Motor neuron (in vitro differentiated cells): ENCODE measurements at regions of chr2 and their contacts with region 1.

Region 1: DNA sequence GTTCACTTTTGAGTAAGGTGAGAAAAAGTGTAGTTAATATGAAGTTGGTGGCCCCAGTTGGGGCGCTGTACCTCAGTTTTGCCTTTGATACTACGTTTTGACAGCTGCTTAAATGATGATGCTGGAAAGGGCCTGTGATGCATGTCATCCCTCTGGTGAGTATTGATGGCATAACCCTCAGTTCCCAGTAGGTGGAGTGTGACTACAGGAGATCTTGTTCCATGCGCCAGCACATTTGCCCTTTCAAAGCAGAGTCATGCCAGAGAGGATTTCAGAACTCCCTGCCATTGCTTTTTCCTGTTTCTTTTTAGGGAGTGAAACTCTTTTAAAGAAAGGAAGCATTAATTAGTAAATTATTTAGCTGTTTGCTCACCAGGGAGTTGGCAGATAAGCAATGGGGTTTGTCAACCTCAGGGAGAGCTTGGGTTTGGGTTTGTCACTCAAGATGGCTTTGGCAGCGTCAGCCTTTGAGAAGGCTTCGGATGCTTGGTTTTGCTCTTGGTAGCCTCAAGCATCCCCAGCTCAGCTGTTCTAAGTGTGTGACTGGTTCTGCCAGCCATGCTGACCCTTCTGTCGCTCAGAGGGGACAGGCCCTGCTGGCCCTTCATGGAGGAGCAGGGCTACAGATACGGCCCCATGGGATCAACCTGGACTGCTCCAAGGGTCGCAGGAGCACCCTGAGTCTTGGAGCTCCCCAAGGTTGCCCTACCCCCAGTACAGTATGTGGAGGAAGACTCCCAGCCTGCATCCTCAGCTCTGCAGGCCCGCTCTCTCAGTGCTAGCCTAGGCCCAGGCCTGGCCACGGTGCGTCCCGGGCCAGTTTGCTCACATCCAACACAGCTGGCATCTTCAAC is 29.1 kb downstream of the ARMC9 start:
- ATAC-seq: peak; percentile 84 to 99 (median 95)
- H3K4me3 ChIP-seq: no peak overlapping the region
- H3K27ac ChIP-seq: no peak overlapping the region
- H3K4me1 ChIP-seq: peaks cover 11 to 14% of the 10 kb centered on the region in 2 donors

Region 2: GRCh38 chr2:231411831-231412617 is 184.5 kb after region 1 on chr2:
- in situ Hi-C with region 1: loop called in 2 of 9 experiments (anchors 25 kb)
- ATAC-seq: peak; percentile 97 to 99 (median 98)
- H3K4me3 ChIP-seq: peak overlapping the region; percentile 31 to 44 (median 39)
- H3K27ac ChIP-seq: peak overlapping the region in 1 of 2 donors; percentile 16
- H3K4me1 ChIP-seq: peaks cover 9 to 25% of the 10 kb centered on the region in 2 donors

Region 3: DNA sequence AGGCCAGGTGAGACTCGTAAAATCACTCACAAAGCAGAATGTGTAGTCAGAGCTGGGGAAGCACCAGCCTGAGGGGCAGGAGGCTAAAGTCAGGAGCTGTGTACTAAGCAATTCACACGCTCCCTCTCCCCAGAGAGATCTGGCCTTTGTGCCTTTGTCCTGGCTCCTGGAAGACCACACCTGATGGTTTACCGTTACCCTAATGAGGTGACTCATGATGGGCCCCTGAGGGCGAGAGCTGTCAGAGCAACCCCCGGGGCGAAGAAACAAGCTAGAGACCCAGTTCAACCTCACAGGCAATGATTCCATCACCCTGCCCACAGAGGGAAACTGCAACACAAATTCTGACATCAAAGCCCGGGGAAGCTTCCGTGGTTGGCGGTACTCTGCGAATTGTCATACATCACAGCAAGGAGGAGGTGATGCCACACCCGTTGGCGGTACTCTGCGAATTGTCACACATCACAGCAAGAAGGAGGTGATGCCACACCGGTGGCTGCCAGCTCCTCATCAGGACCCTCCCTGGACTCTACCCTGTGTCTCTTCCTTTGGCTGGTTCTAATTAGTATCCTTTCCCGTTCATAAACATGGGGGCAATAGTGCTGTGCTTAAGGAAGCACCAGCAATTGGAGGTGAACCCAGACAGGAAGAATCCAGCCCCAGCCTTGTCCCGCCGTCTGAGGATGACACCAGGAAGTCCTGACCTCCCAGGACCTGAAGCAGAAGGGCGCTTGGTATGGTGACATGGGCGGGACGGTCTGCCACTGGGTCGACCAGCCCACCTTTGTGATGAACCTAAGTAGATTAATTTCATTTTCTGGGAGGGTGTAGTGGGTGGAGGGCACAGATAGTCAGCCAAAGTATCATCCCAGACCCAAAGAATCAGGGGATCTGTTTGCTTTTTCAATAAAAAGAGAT is 198.5 kb after region 1 on chr2:
- in situ Hi-C with region 1: loop called in 4 of 9 experiments (anchors 25 kb)
- ATAC-seq: peak in 3 of 8 experiments; percentile 44 to 73 (median 44)
- H3K4me3 ChIP-seq: no peak overlapping the region
- H3K27ac ChIP-seq: no peak overlapping the region
- H3K4me1 ChIP-seq: no peaks in the 10 kb centered on the region

Region 4: DNA sequence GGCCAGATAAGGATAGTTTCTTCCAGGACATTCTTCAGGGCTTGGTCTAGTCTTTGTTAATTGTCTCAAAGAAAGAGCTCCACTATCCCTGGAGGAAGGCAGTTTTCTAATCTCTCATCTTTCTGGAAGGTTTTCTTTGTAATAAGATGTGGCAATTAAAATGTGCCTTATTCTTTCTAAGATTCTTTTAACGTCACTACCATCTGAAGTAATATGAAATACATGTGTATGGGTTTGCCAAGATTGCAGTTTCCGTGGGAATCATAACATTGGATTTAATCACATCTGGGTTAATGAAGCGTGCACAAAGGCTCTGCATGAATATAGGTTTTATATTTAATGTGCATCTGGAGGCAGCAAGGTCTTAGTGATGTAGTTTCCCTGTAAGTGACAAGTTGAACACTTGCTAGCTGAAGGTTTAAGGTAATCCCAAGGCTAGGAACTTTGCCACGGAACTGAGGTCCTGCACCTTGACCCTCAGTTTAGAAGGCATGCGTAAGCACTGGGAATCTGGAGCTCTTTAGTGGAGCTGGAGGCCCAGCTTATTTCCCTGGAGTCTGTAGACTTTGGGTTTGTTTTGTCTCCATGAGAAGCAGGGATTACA is 759.7 kb after region 1 on chr2:
- in situ Hi-C with region 1: no loop called
- ATAC-seq: peak in 3 of 8 experiments; percentile 49 to 92 (median 60)
- H3K4me3 ChIP-seq: no peak overlapping the region
- H3K27ac ChIP-seq: no peak overlapping the region
- H3K4me1 ChIP-seq: peaks cover 0 to 9% of the 10 kb centered on the region in 2 donors

Region 5: DNA sequence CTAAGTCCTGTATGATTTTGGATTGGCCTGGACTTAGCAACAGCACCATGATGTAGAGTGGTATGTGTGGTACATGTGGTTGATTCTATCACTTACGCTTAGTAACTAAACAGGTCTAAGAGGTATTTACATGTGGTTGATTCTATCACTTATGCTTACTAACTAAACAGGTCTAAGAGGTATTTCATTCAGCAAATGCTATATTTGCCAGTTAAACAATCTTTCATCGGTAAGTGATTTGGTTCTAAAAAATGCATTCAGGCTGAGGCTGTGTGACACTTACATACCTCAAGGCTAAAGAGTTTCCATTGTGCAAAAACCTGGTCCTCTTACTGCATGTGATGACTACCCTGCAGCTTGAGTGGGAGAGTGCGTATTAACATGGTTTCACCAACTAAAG is 1336.0 kb after region 1 on chr2:
- in situ Hi-C with region 1: no loop called
- ATAC-seq: no peak
- H3K4me3 ChIP-seq: no peak overlapping the region
- H3K27ac ChIP-seq: no peak overlapping the region
- H3K4me1 ChIP-seq: no peaks in the 10 kb centered on the region